Calu3 (cell line): ENCODE measurements at regions of chr11 and their contacts with region 1.

Region 1: GRCh38 chr11:33687733-33688479 is 12.7 kb downstream of the C11orf91 start:
- DNase-seq: peak; percentile 75
- H3K4me3 Mint-ChIP-seq: no peak overlapping the region
- H3K27ac Mint-ChIP-seq: peak overlapping the region; percentile 92
- H3K4me1 Mint-ChIP-seq: peaks cover 53% of the 10 kb centered on the region
- H3K27me3 Mint-ChIP-seq: no peaks in the 10 kb centered on the region
- CTCF ChIP-seq: peak; percentile 49

Region 2: DNA sequence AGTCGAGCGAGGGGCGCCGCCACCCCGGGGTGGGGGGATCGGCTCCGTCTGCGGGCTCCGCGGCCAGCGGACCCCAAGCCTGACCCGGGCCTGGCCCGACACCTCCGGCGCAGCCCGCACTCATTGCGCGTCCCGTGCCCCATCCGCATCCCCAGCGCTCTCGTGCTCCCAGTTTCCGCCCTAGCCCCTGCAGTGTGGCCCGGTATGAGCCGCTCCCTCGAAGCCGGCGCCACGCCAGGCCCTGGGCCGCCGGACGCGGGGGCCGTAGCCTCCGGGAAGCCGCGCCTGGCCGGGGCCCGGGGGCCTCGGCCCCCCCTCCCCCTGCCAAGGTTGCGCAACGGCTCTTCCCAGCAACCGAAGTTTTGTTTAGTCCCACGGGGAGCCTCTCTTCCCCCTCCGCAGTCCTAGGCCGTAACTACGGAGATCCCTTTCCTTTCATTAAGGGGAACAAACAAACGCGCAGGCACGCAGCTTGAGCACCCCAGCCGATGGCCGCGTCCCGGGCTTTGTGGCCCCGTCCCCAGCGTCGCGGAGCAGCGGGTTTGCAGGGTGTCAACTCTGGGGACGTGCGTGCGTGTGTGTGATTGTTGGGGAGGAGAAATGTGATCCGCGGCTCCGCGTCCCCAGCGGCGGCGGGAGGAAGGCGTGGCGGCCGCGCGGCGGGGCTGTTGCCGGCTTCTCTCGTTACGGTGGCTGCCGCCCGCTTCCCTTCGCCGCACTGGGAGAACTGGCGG is 429.8 kb before region 1 on chr11:
- CTCF ChIA-PET with region 1: no interaction called
- intact Hi-C with region 1: loop called (anchors 5 kb)
- DNase-seq: peak; percentile 79
- H3K4me3 Mint-ChIP-seq: peak overlapping the region; percentile 99
- H3K27ac Mint-ChIP-seq: peak overlapping the region; percentile 97
- H3K4me1 Mint-ChIP-seq: peaks cover 39% of the 10 kb centered on the region
- H3K27me3 Mint-ChIP-seq: no peaks in the 10 kb centered on the region
- CTCF ChIP-seq: no peak

Region 3: DNA sequence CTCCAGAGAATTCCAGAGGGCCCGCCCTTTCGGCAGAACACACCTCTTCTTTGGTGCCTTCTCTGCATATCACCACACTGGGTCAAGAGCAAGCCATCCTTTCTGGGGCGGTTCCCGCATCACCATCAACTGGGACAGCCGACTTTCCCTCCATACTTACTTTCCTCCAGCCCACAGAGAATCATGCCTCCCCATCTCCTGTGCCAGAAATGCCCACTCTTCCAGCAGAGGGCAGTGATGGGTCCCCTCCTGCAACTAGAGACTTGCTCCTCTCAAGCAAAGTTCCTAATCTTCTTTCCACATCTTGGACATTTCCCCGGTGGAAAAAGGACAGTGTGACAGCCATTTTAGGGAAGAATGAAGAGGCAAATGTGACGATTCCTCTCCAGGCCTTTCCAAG is 145.0 kb before region 1 on chr11:
- CTCF ChIA-PET with region 1: no interaction called
- intact Hi-C with region 1: loop called (anchors 5 kb)
- DNase-seq: peak; percentile 73
- H3K4me3 Mint-ChIP-seq: no peak overlapping the region
- H3K27ac Mint-ChIP-seq: no peak overlapping the region
- H3K4me1 Mint-ChIP-seq: peaks cover 8% of the 10 kb centered on the region
- H3K27me3 Mint-ChIP-seq: no peaks in the 10 kb centered on the region
- CTCF ChIP-seq: peak; percentile 53

Region 4: GRCh38 chr11:33575311-33575710 is 112.6 kb before region 1 on chr11:
- CTCF ChIA-PET with region 1: no interaction called
- intact Hi-C with region 1: no loop called
- DNase-seq: no peak
- H3K4me3 Mint-ChIP-seq: no peak overlapping the region
- H3K27ac Mint-ChIP-seq: no peak overlapping the region
- H3K4me1 Mint-ChIP-seq: no peaks in the 10 kb centered on the region
- H3K27me3 Mint-ChIP-seq: no peaks in the 10 kb centered on the region
- CTCF ChIP-seq: no peak

Region 5: DNA sequence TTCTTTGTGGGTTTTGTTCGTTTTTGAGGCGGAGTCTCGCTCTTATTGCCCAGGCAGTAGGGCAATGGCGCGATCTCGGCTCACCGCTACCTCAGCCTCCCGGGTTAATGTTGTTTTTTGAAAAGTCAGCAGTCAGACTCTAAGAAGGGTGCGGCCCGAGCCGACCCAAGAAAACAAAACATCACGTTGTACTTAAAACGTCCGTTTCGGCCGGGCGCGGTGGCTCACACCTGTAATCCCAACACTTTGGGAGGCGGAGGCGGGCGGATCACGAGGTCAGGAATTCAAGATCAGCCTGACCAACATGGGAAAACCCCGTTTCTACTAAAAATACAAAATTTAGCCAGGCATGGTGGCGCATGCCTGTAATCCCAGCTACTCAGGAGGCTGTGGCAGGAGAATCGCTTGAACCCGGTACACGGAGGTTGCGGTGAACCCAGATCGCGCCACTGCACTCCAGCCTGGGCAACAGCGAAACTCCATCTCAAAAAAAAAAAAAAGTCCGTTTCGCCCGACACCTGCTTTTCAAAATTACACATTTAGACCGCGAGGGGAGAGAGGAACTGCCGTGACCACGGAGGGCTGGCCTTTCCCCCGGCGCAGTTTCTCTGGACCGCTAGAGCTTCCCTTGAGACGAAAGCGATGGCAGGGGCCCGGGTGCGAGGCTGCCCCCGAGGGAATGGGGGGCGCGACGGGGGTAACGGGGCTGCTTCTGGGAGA is 47.7 kb after region 1 on chr11:
- CTCF ChIA-PET with region 1: interaction called, 3 read pairs
- intact Hi-C with region 1: loop called (anchors 2 kb)
- DNase-seq: no peak
- H3K4me3 Mint-ChIP-seq: peak overlapping the region; percentile 77
- H3K27ac Mint-ChIP-seq: peak overlapping the region; percentile 58
- H3K4me1 Mint-ChIP-seq: peaks cover 50% of the 10 kb centered on the region
- H3K27me3 Mint-ChIP-seq: no peaks in the 10 kb centered on the region
- CTCF ChIP-seq: no peak

Region 6: GRCh38 chr11:33829433-33830141 is 141.7 kb after region 1 on chr11:
- CTCF ChIA-PET with region 1: no interaction called
- intact Hi-C with region 1: loop called (anchors 1 kb)
- DNase-seq: peak; percentile 71
- H3K4me3 Mint-ChIP-seq: peak overlapping the region; percentile 68
- H3K27ac Mint-ChIP-seq: no peak overlapping the region
- H3K4me1 Mint-ChIP-seq: peaks cover 9% of the 10 kb centered on the region
- H3K27me3 Mint-ChIP-seq: peaks cover 29% of the 10 kb centered on the region
- CTCF ChIP-seq: peak; percentile 75